ENCODE measurements at regions of chr7 and their contacts with region 1.

Region 1: GRCh38 chr7:44415047-44415446 is 75.4 kb downstream of the NUDCD3 start:
- DNase-seq: no peak
- H3K4me3 Mint-ChIP-seq: no peak overlapping the region
- H3K27ac Mint-ChIP-seq: peak overlapping the region; percentile 32
- H3K4me1 Mint-ChIP-seq: peaks cover 8% of the 10 kb centered on the region
- H3K27me3 Mint-ChIP-seq: no peaks in the 10 kb centered on the region

Region 2: DNA sequence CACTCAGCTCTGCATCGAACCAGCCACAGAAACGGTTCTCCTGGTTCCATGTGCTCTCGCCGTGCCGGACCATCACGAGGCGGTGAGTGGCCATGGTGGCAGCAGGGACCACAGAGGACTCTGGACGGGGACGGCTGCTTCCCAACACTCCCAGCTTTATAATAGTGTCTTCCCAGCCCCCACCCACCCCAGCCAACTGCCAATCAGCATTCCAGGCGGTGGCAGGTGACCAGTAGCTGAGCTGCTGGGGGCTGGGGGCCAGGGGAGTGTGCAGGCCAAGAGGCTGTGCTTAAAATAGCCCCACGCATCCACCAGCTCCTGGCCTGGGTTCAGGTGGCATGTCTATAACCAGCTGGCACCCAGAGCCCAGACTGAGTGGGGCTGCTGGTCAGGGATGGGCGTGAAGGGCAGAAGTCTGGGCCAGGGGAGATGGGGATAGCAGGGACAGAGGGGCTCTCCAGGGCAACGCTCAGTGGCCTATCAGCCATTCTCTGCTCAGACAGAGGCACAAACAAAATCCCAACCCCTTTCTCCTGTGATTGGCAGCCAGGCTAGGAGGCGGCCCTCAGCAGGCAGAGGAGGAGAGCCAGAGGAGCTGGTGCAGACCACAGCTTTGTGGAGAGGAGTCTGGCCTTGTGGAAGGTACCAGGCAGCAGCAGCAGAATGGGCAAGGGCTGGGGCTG is 349.5 kb before region 1 on chr7 and contains the start of gene PGAM2:
- intact Hi-C with region 1: no loop called
- DNase-seq: no peak
- H3K4me3 Mint-ChIP-seq: no peak within 1 kb of the TSS
- H3K27ac Mint-ChIP-seq: peak within 1 kb of the TSS; percentile 37
- H3K4me1 Mint-ChIP-seq: no peaks in the 10 kb centered on the region
- H3K27me3 Mint-ChIP-seq: no peaks in the 10 kb centered on the region
- total RNA-seq, gene PGAM2: 0.42 TPM in 1 of 2 replicates, not detected in the other

Region 3: DNA sequence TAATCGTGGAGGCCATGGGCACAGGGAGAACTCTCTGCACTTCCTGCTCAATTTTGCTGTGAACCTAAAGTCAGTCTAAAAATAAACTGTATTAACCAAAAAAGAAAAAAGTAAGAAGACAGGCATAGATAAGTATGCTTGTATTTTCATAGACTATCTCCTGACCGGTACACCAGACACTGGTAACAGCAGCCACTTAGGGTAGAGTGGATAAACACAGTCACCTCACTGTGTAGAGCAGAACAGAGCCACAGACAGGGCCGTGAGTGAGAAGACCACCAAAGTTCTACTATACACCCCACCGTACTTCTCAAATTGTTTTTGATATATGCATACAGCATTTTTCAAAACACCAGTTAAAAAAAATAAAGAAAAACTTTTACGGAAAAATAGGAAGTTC is 50.4 kb after region 1 on chr7:
- intact Hi-C with region 1: loop called (anchors 2 kb)
- DNase-seq: no peak
- H3K4me3 Mint-ChIP-seq: no peak overlapping the region
- H3K27ac Mint-ChIP-seq: peak overlapping the region; percentile 34
- H3K4me1 Mint-ChIP-seq: peaks cover 52% of the 10 kb centered on the region
- H3K27me3 Mint-ChIP-seq: no peaks in the 10 kb centered on the region

Measured in activated CD4-positive, alpha-beta T cell treated with anti-CD3 and anti-CD28 coated beads, Interleukin-2, amount 10 ng/mL, durations not matched to agents 24 days and 14 days (primary cell).